ENCODE measurements at regions of chr7 and their contacts with region 1.

Region 1: GRCh38 chr7:120805636-120806388 is 52.1 kb downstream of the TSPAN12 start:
- DNase-seq: peak; percentile 73 to 86 (median 78)
- ATAC-seq: peak; percentile 89
- H3K4me3 ChIP-seq: no peak overlapping the region
- H3K27ac ChIP-seq: no peak overlapping the region
- H3K4me1 ChIP-seq: no peaks in the 10 kb centered on the region
- H3K27me3 ChIP-seq: no peaks in the 10 kb centered on the region
- CTCF ChIP-seq: peak; percentile 87 to 95 (median 91)
- EP300 ChIP-seq: no peak
- POLR2A ChIP-seq: no peak
- RAD21 ChIP-seq: peak; percentile 83 to 89

Region 2: DNA sequence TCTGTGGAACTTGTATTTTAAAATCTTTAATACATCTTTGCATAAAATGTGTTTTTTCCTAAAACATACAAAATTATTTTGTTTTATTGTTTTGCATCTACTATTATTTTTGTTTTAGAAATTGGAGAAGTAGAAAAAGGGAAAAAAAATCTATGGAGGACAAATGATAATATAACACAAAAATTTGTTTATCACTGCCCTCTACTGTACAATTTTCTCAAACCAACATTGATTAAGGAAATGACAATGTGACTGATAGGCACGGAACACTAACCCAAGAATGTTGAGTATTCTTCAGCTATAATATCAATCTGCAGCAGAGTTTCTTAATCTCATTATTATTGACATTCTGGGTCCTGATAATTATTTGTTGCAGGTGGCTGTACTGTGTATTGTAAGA is 135.3 kb after region 1 on chr7:
- CTCF ChIA-PET with region 1: interaction called, 14 read pairs
- POLR2A ChIA-PET with region 1: no interaction called
- in situ Hi-C with region 1: no loop called
- intact Hi-C with region 1: loop called (anchors 1 kb)
- DNase-seq: peak in 1 of 4 experiments; percentile 23
- ATAC-seq: peak; percentile 60
- H3K4me3 ChIP-seq: no peak overlapping the region
- H3K27ac ChIP-seq: no peak overlapping the region
- H3K4me1 ChIP-seq: no peaks in the 10 kb centered on the region
- H3K27me3 ChIP-seq: no peaks in the 10 kb centered on the region; a peak in 1 of 5 replicates
- CTCF ChIP-seq: peak in 2 of 3 experiments; percentile 18 to 58; a peak in 3 of 6 replicates
- EP300 ChIP-seq: no peak
- POLR2A ChIP-seq: no peak
- RAD21 ChIP-seq: peak; percentile 47 to 62

Region 3: DNA sequence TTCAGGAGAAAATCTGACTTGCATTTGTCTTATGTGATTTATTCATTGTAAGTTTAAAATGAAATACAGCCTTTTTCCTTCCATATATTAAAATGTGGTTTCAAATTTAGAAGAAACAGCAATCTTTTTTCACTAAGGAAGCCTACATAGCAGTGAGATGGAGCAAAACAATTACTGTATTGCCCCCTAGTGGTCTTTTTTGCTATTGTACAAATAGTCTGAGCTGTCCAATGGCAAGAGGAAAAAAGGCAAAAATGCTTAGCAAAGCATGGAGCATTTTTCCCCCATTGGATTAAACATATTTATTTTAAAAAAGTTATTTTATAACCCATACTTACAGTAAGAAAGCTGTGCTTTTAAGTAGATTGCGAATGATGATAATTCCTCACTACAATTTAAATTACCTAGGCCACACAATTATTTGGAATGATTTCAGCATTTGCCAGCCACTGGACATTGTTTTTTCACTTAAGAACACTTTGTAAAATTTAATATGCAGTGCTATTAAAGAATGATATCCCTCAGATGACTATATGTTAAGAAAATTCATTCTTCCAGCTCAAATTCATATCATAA is 302.2 kb after region 1 on chr7:
- CTCF ChIA-PET with region 1: interaction called, 12 read pairs
- POLR2A ChIA-PET with region 1: no interaction called
- in situ Hi-C with region 1: no loop called
- intact Hi-C with region 1: loop called (anchors 2 kb)
- DNase-seq: peak; percentile 67 to 82 (median 79)
- ATAC-seq: peak; percentile 99
- H3K4me3 ChIP-seq: no peak overlapping the region
- H3K27ac ChIP-seq: no peak overlapping the region
- H3K4me1 ChIP-seq: no peaks in the 10 kb centered on the region
- H3K27me3 ChIP-seq: no peaks in the 10 kb centered on the region
- CTCF ChIP-seq: peak; percentile 61 to 95 (median 83)
- EP300 ChIP-seq: no peak
- POLR2A ChIP-seq: no peak
- RAD21 ChIP-seq: peak; percentile 78 to 89

Region 4: DNA sequence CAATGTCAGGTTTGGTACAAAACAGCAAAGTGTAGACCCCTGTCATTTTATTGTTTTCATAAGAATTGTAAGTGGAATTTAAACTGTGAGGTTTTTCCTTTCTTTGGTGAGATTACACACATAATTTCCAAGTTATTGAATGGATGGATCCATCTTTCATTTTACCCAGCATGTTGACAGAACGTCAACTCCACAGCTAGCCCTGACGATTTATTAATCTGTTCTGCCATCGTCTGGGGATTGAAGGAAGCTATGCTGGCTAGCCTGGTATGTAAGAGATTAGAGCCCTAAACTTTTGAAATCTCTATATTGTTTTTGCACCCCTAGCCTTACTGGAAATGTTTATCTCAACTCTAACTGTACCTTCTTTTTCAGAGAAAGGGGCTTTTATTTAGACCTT is 531.6 kb after region 1 on chr7:
- CTCF ChIA-PET with region 1: no interaction called
- POLR2A ChIA-PET with region 1: no interaction called
- in situ Hi-C with region 1: no loop called
- intact Hi-C with region 1: loop called (anchors 1 kb)
- DNase-seq: peak in 1 of 4 experiments; percentile 47
- ATAC-seq: peak; percentile 89
- H3K4me3 ChIP-seq: no peak overlapping the region
- H3K27ac ChIP-seq: no peak overlapping the region
- H3K4me1 ChIP-seq: no peaks in the 10 kb centered on the region
- H3K27me3 ChIP-seq: peaks cover 0 to 15% of the 10 kb centered on the region in 2 experiments; a peak in 2 of 5 replicates
- CTCF ChIP-seq: peak; percentile 43 to 73 (median 68); a peak in 5 of 6 replicates
- EP300 ChIP-seq: no peak
- POLR2A ChIP-seq: no peak
- RAD21 ChIP-seq: peak; percentile 77 to 90

Region 5: DNA sequence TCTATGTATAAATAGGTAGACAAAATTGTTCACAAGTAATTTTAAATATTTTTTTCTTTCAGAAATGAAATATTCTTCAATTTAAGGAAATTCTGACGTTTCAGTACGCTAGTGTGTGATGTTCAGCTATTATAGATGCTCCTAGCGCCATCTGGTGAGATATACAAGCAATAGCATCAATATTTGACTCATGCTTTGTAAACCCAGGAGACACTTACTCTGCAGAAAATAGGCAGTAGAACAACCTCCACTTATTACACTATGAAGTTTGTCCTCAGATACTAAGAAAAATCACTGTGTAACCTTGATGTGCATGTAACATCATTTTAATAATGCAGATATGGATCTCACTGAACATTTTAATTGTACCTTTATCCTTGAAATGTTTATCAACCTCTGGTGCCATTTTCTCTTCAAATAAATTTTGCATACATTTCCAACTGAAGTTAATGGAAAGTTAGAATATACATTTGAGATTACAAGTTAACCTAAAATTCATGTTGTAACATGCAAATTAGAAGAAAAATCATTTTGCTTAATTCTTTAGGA is 741.8 kb after region 1 on chr7:
- CTCF ChIA-PET with region 1: no interaction called
- POLR2A ChIA-PET with region 1: no interaction called
- in situ Hi-C with region 1: no loop called
- intact Hi-C with region 1: loop called (anchors 5 kb)
- DNase-seq: peak; percentile 62 to 77 (median 72)
- ATAC-seq: peak; percentile 95
- H3K4me3 ChIP-seq: no peak overlapping the region
- H3K27ac ChIP-seq: no peak overlapping the region
- H3K4me1 ChIP-seq: no peaks in the 10 kb centered on the region
- H3K27me3 ChIP-seq: no peaks in the 10 kb centered on the region
- CTCF ChIP-seq: peak; percentile 70 to 95 (median 77)
- EP300 ChIP-seq: no peak
- POLR2A ChIP-seq: no peak
- RAD21 ChIP-seq: peak; percentile 99 to 100